GM10248 (cell line): ENCODE measurements at regions of chr12 and their contacts with region 1.

Region 1: DNA sequence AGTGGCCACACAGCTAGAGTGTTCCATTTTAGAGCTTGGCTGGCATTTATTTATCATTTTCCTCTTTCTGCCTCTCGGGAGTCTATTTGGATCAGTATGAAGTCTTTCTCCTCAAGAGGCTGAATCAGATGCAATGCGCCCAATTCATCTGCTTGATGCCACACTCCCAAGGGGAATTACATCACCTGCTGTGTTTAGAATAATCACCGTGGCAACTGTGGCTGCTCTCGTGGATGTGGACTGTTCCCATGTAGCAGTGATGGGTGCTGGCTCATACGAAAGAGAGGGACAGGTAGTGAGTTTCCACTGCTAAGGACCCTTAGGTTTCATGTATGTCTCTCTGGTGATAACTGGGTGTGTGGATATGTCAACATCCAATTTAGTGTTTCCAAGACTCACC is 70.7 kb downstream of the SRRM4 start:
- DNase-seq: no peak
- CTCF ChIP-seq: no peak

Region 2: DNA sequence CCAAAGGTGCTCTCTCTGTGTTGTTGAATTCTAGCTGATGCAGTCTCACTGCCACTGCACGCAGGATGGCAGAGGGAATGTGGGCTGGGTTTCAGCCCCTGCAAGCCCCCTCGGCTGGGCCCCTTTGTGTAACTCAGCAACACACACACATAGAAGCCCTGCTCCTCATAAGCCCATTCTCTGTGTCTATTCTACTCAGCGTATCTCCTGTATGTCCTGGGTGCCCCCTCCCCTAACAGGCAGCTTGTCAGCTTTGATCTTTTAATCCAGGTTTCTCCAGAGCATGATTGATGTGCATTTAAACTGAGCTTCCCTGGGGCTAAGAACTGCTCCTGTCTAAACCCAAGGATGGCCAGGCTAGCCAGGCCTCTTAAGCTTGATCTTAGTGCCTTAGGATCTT is 27.6 kb before region 1 on chr12:
- CTCF ChIA-PET with region 1: no interaction called
- POLR2A ChIA-PET with region 1: no interaction called
- DNase-seq: no peak
- CTCF ChIP-seq: no peak

Region 3: GRCh38 chr12:119036878-119037825 is 14.8 kb before region 1 on chr12:
- CTCF ChIA-PET with region 1: interaction called, 17 read pairs
- POLR2A ChIA-PET with region 1: no interaction called
- DNase-seq: peak; percentile 59
- CTCF ChIP-seq: peak; percentile 52

Region 4: DNA sequence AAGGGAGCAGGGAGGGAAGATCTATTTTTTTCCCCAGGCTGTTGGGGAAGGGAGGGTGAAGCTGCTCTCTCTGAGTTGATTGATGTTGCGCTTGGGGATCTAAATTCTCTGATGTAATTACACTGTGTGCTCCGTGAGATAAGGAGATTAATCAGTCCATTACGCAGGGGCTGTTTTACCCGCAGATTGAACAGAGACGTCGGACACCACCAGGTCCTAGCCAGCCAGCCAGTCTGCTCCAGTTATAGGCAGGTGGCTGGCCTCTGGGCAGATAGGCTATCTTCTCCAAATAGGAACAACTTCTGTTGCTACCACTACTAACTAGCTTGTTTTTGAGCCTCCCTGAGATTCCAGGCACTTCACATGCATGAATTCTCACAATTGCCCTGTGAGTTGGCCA is 20.4 kb after region 1 on chr12:
- CTCF ChIA-PET with region 1: no interaction called
- POLR2A ChIA-PET with region 1: no interaction called
- DNase-seq: no peak
- CTCF ChIP-seq: no peak

Region 5: GRCh38 chr12:119115296-119115905 is 63.4 kb after region 1 on chr12:
- CTCF ChIA-PET with region 1: no interaction called
- POLR2A ChIA-PET with region 1: no interaction called
- DNase-seq: peak; percentile 59
- CTCF ChIP-seq: peak; percentile 73